ENCODE measurements at regions of chr5 and their contacts with region 1.

Region 1: GRCh38 chr5:158414780-158415179 is 555.8 kb upstream of the CLINT1 start:
- H3K4me3 Mint-ChIP-seq: no peak overlapping the region
- H3K27ac Mint-ChIP-seq: no peak overlapping the region
- H3K4me1 Mint-ChIP-seq: peaks cover 25% of the 10 kb centered on the region
- H3K27me3 Mint-ChIP-seq: peaks cover 3% of the 10 kb centered on the region

Region 2: DNA sequence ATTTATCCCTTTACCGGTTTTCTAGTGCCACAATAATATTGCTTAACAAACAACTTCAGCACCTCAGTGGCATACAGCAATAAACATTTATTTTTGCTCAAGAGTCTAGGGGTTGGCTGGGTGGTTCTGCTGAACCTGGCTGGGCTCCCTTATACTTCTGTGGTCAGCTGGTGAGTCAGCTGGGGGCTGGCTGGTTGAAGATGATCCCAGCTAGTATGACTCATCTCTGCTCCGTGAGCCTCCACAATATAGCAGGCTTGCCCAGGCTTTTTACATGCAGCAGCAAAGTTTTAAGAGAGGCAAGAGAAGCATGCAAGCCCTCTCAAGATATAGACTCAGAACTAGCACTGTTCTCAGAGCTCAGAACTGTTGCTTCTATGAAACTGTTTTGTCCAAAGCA is 32.3 kb before region 1 on chr5:
- intact Hi-C with region 1: loop called (anchors 5 kb)
- H3K4me3 Mint-ChIP-seq: no peak overlapping the region
- H3K27ac Mint-ChIP-seq: no peak overlapping the region
- H3K4me1 Mint-ChIP-seq: peaks cover 63% of the 10 kb centered on the region
- H3K27me3 Mint-ChIP-seq: peaks cover 7% of the 10 kb centered on the region